Activated CD4-positive, alpha-beta memory T cell treated with anti-CD3 and anti-CD28 coated beads for 36 hours (primary cell): ENCODE measurements at regions of chr16 and their contacts with region 1.

Region 1: GRCh38 chr16:89115216-89115861 is 21.7 kb downstream of the ACSF3 start:
- DNase-seq: peak; percentile 91
- H3K4me3 Mint-ChIP-seq: peak overlapping the region; percentile 60
- H3K27ac Mint-ChIP-seq: peak overlapping the region; percentile 89
- H3K4me1 Mint-ChIP-seq: peaks cover 28% of the 10 kb centered on the region
- H3K27me3 Mint-ChIP-seq: no peaks in the 10 kb centered on the region

Region 2: DNA sequence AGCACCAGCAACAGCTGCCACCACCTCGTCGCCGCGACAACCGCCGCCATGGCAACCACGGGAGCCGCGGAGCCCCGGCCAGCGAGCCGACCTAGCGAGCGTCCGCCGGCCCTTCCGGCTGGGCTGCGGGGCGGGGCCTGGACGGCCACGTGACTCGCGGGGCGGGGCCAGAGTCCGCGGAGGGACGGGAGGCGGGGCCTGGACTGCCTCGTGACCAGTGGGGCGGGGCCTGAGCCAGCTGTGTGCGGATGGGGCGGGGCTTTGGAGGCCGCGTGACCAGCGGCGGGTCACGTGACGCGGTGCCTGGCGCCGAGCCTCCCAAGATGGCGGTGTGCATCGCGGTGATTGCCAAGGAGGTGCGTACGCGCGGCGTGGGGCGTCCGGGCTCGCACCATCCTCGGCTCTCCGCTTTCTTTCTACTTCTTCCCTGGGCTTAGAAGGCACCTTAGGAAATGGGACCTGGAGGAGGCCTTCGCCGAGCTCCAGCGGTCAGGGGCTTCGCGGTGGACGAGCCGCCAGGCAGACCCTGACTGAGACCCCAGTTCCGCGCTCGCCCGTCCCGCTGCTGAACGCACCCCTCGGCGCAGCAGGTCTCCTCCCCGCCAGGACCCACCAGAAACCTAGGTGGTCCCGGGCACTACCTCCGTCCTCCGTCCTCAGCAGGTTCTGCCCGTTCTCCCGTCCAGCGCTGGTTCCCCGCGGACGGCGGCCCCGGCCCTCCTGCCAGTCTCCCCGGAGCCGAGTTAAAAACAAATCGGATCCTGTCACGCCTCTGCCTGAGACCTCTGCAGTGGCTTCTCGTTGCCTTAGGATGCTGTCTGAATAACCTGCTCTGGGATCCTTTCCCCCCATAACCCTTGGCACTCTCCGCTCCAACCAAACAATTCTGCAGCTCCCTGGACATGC is 258.3 kb before region 1 on chr16 and contains the starts of genes GALNS and TRAPPC2L:
- CTCF ChIA-PET with region 1: interaction called, 3 read pairs
- POLR2A ChIA-PET with region 1: no interaction called
- intact Hi-C with region 1: loop called (anchors 10 kb)
- DNase-seq: peak; percentile 99
- H3K4me3 Mint-ChIP-seq: peak within 1 kb of the TSS; percentile 93
- H3K27ac Mint-ChIP-seq: peak within 1 kb of the TSS; percentile 72
- H3K4me1 Mint-ChIP-seq: peaks cover 23% of the 10 kb centered on the region
- H3K27me3 Mint-ChIP-seq: no peaks in the 10 kb centered on the region
- total RNA-seq, gene GALNS: 22.0 to 24.1 TPM
- total RNA-seq, gene TRAPPC2L: 63.6 to 71.5 TPM

Region 3: GRCh38 chr16:89093602-89094251 is 21.6 kb before region 1 on chr16 and contains the start of gene ACSF3:
- CTCF ChIA-PET with region 1: interaction called, 3 read pairs
- POLR2A ChIA-PET with region 1: interaction called, 5 read pairs
- intact Hi-C with region 1: loop called (anchors 1 kb)
- DNase-seq: peak; percentile 70
- H3K4me3 Mint-ChIP-seq: peak within 1 kb of the TSS; percentile 97
- H3K27ac Mint-ChIP-seq: peak within 1 kb of the TSS; percentile 94
- H3K4me1 Mint-ChIP-seq: peaks cover 50% of the 10 kb centered on the region
- H3K27me3 Mint-ChIP-seq: peaks cover 4% of the 10 kb centered on the region
- total RNA-seq, gene ACSF3: 36.1 to 37.3 TPM